GM12878 (cell line): ENCODE measurements at regions of chr1 and their contacts with region 1.

Region 1: GRCh38 chr1:24744911-24745710 is at the start of gene CLIC4:
- DNase-seq: peak; percentile 94
- ATAC-seq: peak; percentile 78
- H3K4me3 ChIP-seq: peak within 1 kb of the TSS; percentile 77
- H3K27ac ChIP-seq: peak within 1 kb of the TSS; percentile 76
- H3K4me1 ChIP-seq: peaks cover 34% of the 10 kb centered on the region
- H3K27me3 ChIP-seq: no peaks in the 10 kb centered on the region
- CTCF ChIP-seq: peak in 2 of 3 experiments; percentile 18 to 72; a peak in 3 of 6 replicates
- EP300 ChIP-seq: peak; percentile 34 to 64; a peak in 2 of 4 replicates
- POLR2A ChIP-seq: peak; percentile 91
- RAD21 ChIP-seq: no peak; the same call in 1 of the 2 replicates
- polyA plus RNA-seq, gene CLIC4: 20.4 to 26.5 TPM

Region 2: GRCh38 chr1:24642481-24643361 is 102.4 kb before region 1 on chr1 and contains the start of gene SRRM1:
- CTCF ChIA-PET with region 1: interaction called, 3 read pairs
- POLR2A ChIA-PET with region 1: interaction called, 5 read pairs
- RAD21 ChIA-PET with region 1: interaction called, 4 read pairs
- SMC1A ChIA-PET with region 1: interaction called, 3 read pairs
- in situ Hi-C with region 1: no loop called
- intact Hi-C with region 1: loop called (anchors 5 kb)
- DNase-seq: peak; percentile 98
- ATAC-seq: peak; percentile 93
- H3K4me3 ChIP-seq: peak within 1 kb of the TSS; percentile 94
- H3K27ac ChIP-seq: peak within 1 kb of the TSS; percentile 99
- H3K4me1 ChIP-seq: peaks cover 9% of the 10 kb centered on the region
- H3K27me3 ChIP-seq: no peaks in the 10 kb centered on the region
- CTCF ChIP-seq: peak in 2 of 3 experiments; percentile 13 to 20; a peak in 2 of 6 replicates
- EP300 ChIP-seq: peak in 1 of 2 experiments; percentile 52; a peak in 1 of 4 replicates
- POLR2A ChIP-seq: peak; percentile 93
- RAD21 ChIP-seq: no peak
- polyA plus RNA-seq, gene SRRM1: 139 to 269 TPM

Region 3: GRCh38 chr1:24705260-24706073 is 39.6 kb before region 1 on chr1:
- CTCF ChIA-PET with region 1: interaction called, 10 read pairs
- POLR2A ChIA-PET with region 1: interaction called, 4 read pairs
- RAD21 ChIA-PET with region 1: interaction called, 8 read pairs
- SMC1A ChIA-PET with region 1: interaction called, 9 read pairs
- in situ Hi-C with region 1: no loop called
- intact Hi-C with region 1: loop called (anchors 1 kb)
- DNase-seq: peak; percentile 82
- ATAC-seq: peak; percentile 99
- H3K4me3 ChIP-seq: peak overlapping the region; percentile 8; the same call in 1 of the 2 replicates
- H3K27ac ChIP-seq: no peak overlapping the region
- H3K4me1 ChIP-seq: peaks cover 3% of the 10 kb centered on the region
- H3K27me3 ChIP-seq: no peaks in the 10 kb centered on the region
- CTCF ChIP-seq: no peak
- EP300 ChIP-seq: no peak
- POLR2A ChIP-seq: no peak
- RAD21 ChIP-seq: no peak

Region 4: GRCh38 chr1:24762133-24762676 is 17.1 kb after region 1 on chr1:
- CTCF ChIA-PET with region 1: interaction called, 30 read pairs
- POLR2A ChIA-PET with region 1: interaction called, 9 read pairs
- RAD21 ChIA-PET with region 1: interaction called, 56 read pairs
- SMC1A ChIA-PET with region 1: interaction called, 174 read pairs
- in situ Hi-C with region 1: no loop called
- intact Hi-C with region 1: no loop called
- DNase-seq: no peak
- ATAC-seq: no peak; the same call in 1 of the 3 replicates
- H3K4me3 ChIP-seq: no peak overlapping the region
- H3K27ac ChIP-seq: no peak overlapping the region
- H3K4me1 ChIP-seq: peaks cover 4% of the 10 kb centered on the region; the same call in 1 of the 2 replicates
- H3K27me3 ChIP-seq: no peaks in the 10 kb centered on the region
- CTCF ChIP-seq: no peak
- EP300 ChIP-seq: no peak
- POLR2A ChIP-seq: no peak
- RAD21 ChIP-seq: no peak

Region 5: DNA sequence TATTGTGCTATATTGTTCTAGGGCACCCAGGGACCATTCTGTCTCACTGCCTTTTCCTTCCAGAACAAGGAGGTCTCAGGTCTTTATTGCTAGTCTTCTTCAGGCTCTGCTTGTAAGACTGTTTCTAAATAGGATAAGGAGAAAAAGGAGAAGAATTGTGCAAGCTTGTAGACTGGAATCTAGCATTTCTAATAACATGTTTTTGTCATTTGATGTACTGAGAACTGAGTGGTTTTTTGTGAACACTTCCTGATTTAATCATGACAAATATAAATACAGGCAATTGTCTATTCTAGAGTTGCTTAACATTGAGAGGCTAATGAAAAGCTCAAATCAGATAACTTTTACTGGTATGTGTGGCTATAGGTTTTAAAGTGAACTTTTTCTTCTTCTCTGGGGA is 77.8 kb after region 1 on chr1:
- CTCF ChIA-PET with region 1: interaction called, 8 read pairs
- POLR2A ChIA-PET with region 1: interaction called, 7 read pairs
- RAD21 ChIA-PET with region 1: interaction called, 120 read pairs
- SMC1A ChIA-PET with region 1: interaction called, 107 read pairs
- in situ Hi-C with region 1: no loop called
- intact Hi-C with region 1: no loop called
- DNase-seq: no peak
- ATAC-seq: no peak
- H3K4me3 ChIP-seq: no peak overlapping the region
- H3K27ac ChIP-seq: no peak overlapping the region
- H3K4me1 ChIP-seq: no peaks in the 10 kb centered on the region
- H3K27me3 ChIP-seq: no peaks in the 10 kb centered on the region
- CTCF ChIP-seq: no peak
- EP300 ChIP-seq: no peak
- POLR2A ChIP-seq: no peak
- RAD21 ChIP-seq: no peak

Region 6: DNA sequence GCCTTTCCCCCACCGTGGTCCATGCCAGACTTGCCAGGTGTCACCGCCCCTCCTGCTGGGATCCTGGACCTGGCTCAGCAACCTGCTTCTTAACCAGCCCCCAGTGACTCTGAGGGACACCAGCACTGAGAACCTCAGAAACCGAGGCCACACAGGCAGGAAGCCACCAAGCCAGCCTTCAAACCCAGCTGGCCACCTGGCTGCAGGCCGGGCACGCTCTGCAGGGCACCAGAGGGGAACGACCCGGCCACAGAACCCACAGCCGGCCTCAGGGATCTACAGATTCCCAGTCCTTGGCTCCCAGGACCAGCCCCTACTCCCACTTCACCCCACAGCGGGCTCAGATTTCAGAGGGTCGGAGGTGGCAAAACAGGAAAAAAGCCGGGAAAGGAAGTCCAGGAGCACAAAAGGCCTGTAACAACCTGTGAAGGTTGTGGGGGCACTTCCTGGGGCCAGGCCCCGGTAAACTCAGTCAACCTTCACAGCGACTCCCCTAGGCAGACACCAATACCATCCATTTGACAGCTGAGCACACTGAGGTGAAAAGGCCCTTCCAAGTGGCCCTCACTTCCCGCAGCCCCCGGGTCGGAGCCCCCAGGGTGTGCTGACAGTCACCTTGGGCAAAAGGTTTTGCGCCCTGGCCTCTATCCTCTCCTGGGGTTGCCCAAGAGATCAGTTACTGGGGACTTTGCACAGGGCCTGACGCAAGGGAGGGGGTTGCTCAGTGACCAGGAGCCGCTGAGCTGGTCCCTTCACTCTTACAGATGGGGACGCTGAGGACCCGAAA is 170.9 kb after region 1 on chr1:
- CTCF ChIA-PET with region 1: no interaction called
- POLR2A ChIA-PET with region 1: no interaction called
- RAD21 ChIA-PET with region 1: no interaction called
- SMC1A ChIA-PET with region 1: no interaction called
- in situ Hi-C with region 1: no loop called
- intact Hi-C with region 1: no loop called
- DNase-seq: no peak
- ATAC-seq: peak; percentile 73
- H3K4me3 ChIP-seq: no peak overlapping the region
- H3K27ac ChIP-seq: peak overlapping the region; percentile 23; the same call in 1 of the 2 replicates
- H3K4me1 ChIP-seq: peaks cover 44% of the 10 kb centered on the region
- H3K27me3 ChIP-seq: no peaks in the 10 kb centered on the region
- CTCF ChIP-seq: no peak
- EP300 ChIP-seq: 0 out of 4 replicates have a peak, but pooled peaks of 1 of the 2 experiments have one; percentile 15
- POLR2A ChIP-seq: peak; percentile 52
- RAD21 ChIP-seq: no peak

Region 7: GRCh38 chr1:25003457-25004190 is 258.5 kb after region 1 on chr1:
- CTCF ChIA-PET with region 1: no interaction called
- POLR2A ChIA-PET with region 1: no interaction called
- RAD21 ChIA-PET with region 1: no interaction called
- SMC1A ChIA-PET with region 1: no interaction called
- in situ Hi-C with region 1: no loop called
- intact Hi-C with region 1: no loop called
- DNase-seq: no peak
- ATAC-seq: peak; percentile 21; the same call in 2 of the 3 replicates
- H3K4me3 ChIP-seq: no peak overlapping the region
- H3K27ac ChIP-seq: no peak overlapping the region
- H3K4me1 ChIP-seq: peaks cover 7% of the 10 kb centered on the region
- H3K27me3 ChIP-seq: no peaks in the 10 kb centered on the region
- CTCF ChIP-seq: no peak
- EP300 ChIP-seq: no peak
- POLR2A ChIP-seq: no peak
- RAD21 ChIP-seq: no peak